Psoas muscle (tissue), 8 donors: ENCODE measurements at regions of chr16 and their contacts with region 1.

Region 1: DNA sequence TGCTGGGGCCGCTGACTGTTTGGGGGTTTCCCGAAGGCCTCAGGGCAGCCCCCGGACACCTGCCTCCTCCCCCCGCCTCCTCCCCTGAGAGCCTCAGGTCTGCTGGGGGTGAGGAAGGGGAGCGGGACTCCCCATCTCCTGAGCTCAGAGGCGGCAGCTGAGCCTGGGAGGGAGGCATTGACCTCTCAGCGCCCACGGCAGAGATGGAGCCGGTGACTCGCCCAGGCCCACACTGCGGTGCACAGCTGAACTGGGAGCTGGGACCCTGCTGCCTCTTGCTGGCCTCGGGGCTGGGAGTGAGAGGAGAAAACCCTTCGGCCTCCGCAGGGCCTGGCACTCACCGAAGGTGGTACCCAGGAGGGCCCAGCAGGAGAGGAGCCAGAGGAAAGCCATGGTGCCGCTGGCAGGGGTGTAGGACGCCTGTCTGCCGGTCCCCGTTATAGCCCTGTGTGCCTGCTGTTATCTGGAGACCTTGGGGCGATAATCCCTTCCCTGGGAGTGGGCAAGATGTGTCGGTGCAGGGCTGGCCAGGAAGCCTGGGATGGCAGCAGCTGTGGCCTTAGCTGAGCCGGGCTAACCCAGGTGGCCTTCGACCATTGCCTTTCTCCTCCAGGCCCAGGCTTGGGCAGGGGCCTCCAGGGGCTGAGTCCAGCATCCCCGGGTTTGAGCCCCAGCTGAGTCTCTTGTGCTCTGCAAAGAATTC is at the start of gene CTRB2:
- DNase-seq: peak in 1 of 2 donors; percentile 10
- ATAC-seq: peak in 2 of 4 donors; percentile 16 to 26
- H3K4me3 ChIP-seq: no peak within 1 kb of the TSS
- H3K27ac ChIP-seq: no peak within 1 kb of the TSS
- H3K4me1 ChIP-seq: no peaks in the 10 kb centered on the region
- H3K27me3 ChIP-seq: no peaks in the 10 kb centered on the region
- CTCF ChIP-seq: no peak
- total RNA-seq, gene CTRB2: 2.4 TPM in 1 of 4 donors, not detected in the others

Region 2: GRCh38 chr16:75218256-75219070 is 11.6 kb after region 1 on chr16 and contains the start of gene CTRB1:
- intact Hi-C with region 1: loop called (anchors 1 to 2 kb)
- DNase-seq: no peak
- ATAC-seq: peak in 3 of 4 donors; percentile 13 to 31 (median 26)
- H3K4me3 ChIP-seq: no peak within 1 kb of the TSS
- H3K27ac ChIP-seq: no peak within 1 kb of the TSS
- H3K4me1 ChIP-seq: no peaks in the 10 kb centered on the region
- H3K27me3 ChIP-seq: peaks cover 0 to 2% (median 0%) of the 10 kb centered on the region in 3 donors
- CTCF ChIP-seq: no peak
- total RNA-seq, gene CTRB1: 1.2 to 3.9 TPM in 2 of 4 donors, not detected in the others

Region 3: GRCh38 chr16:75224306-75225091 is 17.6 kb after region 1 on chr16:
- intact Hi-C with region 1: loop called (anchors 1 to 2 kb)
- DNase-seq: peak in 1 of 2 donors; percentile 55
- ATAC-seq: peak; percentile 17 to 47 (median 26)
- H3K4me3 ChIP-seq: no peak overlapping the region
- H3K27ac ChIP-seq: no peak overlapping the region
- H3K4me1 ChIP-seq: no peaks in the 10 kb centered on the region
- H3K27me3 ChIP-seq: no peaks in the 10 kb centered on the region
- CTCF ChIP-seq: no peak